Cardiac septum (tissue), 1 donor: ENCODE measurements at regions of chr16 and their contacts with region 1.

Region 1: GRCh38 chr16:48365581-48366164 is 19.5 kb downstream of the SIAH1 start:
- DNase-seq: peak; percentile 97

Region 2: DNA sequence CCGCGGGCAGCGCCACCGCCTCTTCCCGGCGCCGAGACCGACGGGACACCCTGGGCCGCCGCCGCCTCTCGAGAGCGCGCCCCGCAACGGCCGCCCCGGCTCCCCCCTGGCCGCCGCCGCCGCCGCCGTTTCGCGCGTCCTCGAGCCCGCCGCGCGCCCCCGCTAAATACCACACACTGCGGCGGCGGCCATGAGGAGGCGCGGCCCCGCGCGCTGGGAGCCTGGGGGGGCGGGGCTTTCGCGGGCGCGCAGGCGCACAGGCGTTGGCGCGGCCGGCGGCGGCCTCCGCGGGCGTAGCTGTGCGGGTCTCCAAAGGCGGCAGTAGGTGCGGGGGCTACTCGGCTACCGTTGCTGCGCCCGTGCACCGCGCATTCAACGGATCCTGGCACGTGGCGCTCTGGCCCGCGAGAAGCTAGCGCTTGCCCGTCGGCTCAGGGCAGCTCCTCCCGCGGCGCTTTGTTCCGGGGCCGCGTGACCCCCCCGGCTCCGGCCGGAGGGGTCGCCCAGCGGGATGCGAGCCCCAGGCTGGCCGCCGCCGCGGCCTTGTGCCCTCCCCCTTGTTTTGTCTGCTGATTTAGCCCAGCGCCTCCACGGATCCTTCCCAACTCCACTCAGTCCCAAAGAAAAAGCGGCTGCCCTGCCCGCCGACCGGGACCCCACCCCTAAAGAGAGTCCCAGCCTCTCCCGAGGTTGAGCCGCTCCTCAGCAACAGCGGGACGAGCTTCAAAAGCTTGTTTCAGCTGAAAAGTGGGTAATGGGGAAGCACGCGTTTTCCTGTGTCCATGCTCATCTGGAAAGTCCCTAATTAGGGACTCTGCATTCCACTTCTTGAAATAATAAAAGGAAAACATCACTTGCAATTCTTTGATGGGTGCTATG is 19.8 kb after region 1 on chr16 and contains the start of gene SIAH1:
- intact Hi-C with region 1: loop called (anchors 1 kb)
- DNase-seq: peak; percentile 94
- total RNA-seq, gene SIAH1: 13.8 TPM

Region 3: DNA sequence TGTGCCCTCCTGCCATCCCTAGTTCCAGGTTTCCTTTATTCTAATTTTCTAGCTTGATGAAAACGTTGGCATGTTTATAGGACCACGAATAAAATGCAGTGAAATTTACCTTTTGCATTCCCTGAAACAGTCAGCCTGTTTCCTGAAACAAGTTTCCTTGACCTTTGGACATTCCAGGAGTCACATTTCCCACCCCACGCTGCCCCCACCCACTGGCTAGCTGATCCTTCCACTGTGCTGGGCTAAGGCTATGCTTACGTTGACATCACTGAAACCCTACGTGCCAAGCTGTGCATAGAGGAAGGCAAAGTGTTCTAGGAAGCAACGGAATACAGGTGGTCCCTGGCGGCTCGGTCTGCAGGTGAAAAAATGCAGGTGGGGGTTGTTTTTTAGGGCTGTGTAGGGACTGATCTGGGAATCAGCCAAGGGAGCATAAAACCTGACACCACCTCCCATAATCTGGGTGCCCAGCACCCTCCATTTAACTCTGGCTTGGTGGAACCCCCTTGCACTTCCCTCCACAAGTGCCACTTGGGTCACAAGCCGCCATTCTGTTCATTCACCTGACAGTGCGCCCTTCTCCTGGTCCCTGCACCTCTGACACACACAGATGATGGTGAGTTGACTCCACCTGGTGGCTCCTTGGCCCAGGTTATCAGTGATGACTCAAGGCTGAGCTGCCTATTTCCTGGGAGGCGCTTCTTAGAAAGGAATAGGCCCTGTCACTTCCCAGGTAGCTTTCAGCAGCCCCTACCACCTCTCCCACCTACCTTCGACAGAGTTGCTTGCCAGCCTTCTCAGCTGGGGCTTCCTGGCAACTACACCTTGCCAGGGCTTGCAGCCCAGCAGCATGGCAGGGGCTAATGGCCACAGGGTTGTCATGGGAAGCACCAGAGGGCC is 160.6 kb after region 1 on chr16:
- intact Hi-C with region 1: no loop called
- DNase-seq: peak; percentile 54

Region 4: DNA sequence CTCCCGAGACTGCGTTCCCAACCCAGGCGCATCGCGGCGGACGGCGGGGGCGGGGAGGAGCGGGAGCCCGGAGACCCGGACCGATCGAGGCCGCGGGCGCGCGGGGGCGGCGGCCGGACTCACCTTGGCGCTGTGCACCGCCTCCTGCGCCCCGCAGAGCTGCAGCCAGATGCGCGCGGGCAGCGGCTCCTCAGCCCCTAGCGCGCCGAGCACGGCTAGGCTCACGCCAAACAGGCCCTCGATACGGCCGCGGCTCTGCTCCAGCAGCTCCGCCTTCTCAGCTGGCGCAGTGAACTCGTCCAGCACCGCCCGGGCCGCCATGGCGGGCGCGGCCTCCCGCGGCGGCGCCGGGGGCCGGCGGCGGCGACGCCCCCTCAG is 244.0 kb after region 1 on chr16:
- intact Hi-C with region 1: loop called (anchors 5 kb)
- DNase-seq: peak; percentile 82